ENCODE measurements at regions of chr1 and their contacts with region 1.

Region 1: GRCh38 chr1:201361652-201362504 is 15.6 kb downstream of the TNNT2 start:
- DNase-seq: peak; percentile 29
- H3K4me3 ChIP-seq: no peak overlapping the region
- H3K27ac ChIP-seq: no peak overlapping the region
- H3K4me1 ChIP-seq: peaks cover 11% of the 10 kb centered on the region
- H3K27me3 ChIP-seq: no peaks in the 10 kb centered on the region
- CTCF ChIP-seq: peak; percentile 86 to 93

Region 2: GRCh38 chr1:201149400-201149799 is 212.5 kb before region 1 on chr1:
- CTCF ChIA-PET with region 1: interaction called, 3 read pairs
- dilution Hi-C with region 1: no loop called
- in situ Hi-C with region 1: no loop called
- intact Hi-C with region 1: loop called (anchors 2 kb)
- DNase-seq: no peak
- H3K4me3 ChIP-seq: no peak overlapping the region
- H3K27ac ChIP-seq: no peak overlapping the region
- H3K4me1 ChIP-seq: peaks cover 7% of the 10 kb centered on the region
- H3K27me3 ChIP-seq: no peaks in the 10 kb centered on the region
- CTCF ChIP-seq: peak; percentile 56 to 58

Region 3: DNA sequence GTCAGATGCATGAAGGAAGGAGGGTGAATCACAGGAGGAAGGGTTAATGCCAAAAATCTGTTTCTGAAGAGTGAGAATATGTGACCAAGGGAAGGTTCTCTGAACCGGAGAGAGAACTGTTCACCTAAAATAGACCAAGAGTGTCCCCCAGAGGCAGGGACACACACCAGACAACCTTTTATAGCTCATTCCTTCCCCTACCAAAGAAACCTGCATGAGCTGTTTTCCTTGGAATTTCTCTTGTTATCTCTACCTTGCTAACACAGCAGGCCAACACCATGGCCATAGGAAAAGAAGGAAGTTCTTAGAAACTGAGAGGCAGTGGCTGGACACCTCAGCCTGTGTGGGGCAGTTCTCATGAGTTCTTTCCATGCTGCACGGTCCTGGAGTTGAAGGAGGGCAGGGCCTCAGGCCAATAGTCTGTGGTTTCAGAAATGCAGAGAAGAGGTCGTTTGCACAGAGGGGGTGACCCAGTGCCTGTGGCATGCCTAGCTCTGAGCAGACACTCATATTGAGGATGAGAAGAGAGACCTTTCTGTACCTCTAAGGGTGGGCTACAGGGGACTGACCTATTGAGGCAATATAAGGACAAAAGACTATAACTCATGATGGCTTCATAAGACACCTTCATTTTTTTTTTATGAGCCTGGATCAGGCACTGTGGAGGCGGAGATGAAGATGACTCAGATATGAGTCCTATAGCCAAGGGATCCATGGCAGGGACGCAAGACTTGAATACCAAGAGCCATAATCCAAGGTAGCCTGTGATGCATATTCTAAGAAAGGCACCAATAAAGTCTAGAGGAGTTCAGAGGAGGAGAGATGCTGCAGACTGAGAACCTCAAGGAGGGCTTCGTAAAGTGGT is 131.9 kb before region 1 on chr1:
- CTCF ChIA-PET with region 1: no interaction called
- dilution Hi-C with region 1: loop called (anchors 5 kb)
- in situ Hi-C with region 1: no loop called
- intact Hi-C with region 1: no loop called
- DNase-seq: peak; percentile 75
- H3K4me3 ChIP-seq: no peak overlapping the region
- H3K27ac ChIP-seq: no peak overlapping the region
- H3K4me1 ChIP-seq: peaks cover 14% of the 10 kb centered on the region
- H3K27me3 ChIP-seq: no peaks in the 10 kb centered on the region
- CTCF ChIP-seq: no peak

Region 4: DNA sequence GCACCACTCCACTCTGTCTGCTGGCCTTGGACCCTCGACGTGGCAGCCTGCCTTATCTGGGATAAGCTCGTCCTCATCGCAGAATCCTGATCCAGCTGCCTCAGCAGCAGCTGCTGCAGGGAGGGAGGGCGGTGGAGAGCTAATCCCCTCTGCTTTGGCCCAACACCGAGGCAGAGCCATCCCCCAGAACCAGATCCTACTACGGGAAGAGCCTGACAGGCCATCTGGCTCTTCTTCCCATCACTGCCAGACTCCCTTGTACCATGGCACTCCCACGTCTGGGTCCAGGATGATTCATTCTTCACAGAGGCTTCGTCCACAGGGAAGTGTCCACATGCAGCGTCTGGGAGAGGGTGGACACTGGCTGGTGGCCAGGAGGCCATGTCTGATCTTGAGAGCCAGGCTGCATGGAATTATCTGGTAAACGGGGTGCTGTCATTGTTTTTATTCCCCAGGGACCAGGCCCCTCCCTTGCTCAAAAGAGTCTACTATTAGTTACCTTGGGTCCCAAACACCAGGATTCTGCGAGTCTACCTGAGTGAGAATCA is 93.2 kb before region 1 on chr1:
- CTCF ChIA-PET with region 1: no interaction called
- dilution Hi-C with region 1: no loop called
- in situ Hi-C with region 1: loop called in 1 of 2 experiments (anchors 10 kb)
- intact Hi-C with region 1: no loop called
- DNase-seq: peak; percentile 80
- H3K4me3 ChIP-seq: no peak overlapping the region
- H3K27ac ChIP-seq: peak overlapping the region; percentile 94
- H3K4me1 ChIP-seq: peaks cover 42% of the 10 kb centered on the region
- H3K27me3 ChIP-seq: no peaks in the 10 kb centered on the region
- CTCF ChIP-seq: no peak

Region 5: GRCh38 chr1:201309426-201309825 is 52.5 kb before region 1 on chr1:
- CTCF ChIA-PET with region 1: no interaction called
- dilution Hi-C with region 1: loop called (anchors 5 kb)
- in situ Hi-C with region 1: no loop called
- intact Hi-C with region 1: loop called (anchors 1 kb)
- DNase-seq: peak; percentile 94
- H3K4me3 ChIP-seq: no peak overlapping the region
- H3K27ac ChIP-seq: peak overlapping the region; percentile 98
- H3K4me1 ChIP-seq: peaks cover 64% of the 10 kb centered on the region
- H3K27me3 ChIP-seq: no peaks in the 10 kb centered on the region
- CTCF ChIP-seq: peak in 1 of 2 donors; percentile 30